GM12878 (cell line): ENCODE measurements at regions of chr18 and their contacts with region 1.

Region 1: GRCh38 chr18:54671291-54671881 is 80.3 kb downstream of the DYNAP start:
- DNase-seq: no peak
- ATAC-seq: 0 out of 3 replicates have a peak, but pooled peaks have one; percentile 21
- H3K4me3 ChIP-seq: no peak overlapping the region
- H3K27ac ChIP-seq: no peak overlapping the region
- H3K4me1 ChIP-seq: no peaks in the 10 kb centered on the region
- H3K27me3 ChIP-seq: no peaks in the 10 kb centered on the region
- CTCF ChIP-seq: peak; percentile 20 to 50 (median 39); a peak in 3 of 6 replicates
- EP300 ChIP-seq: no peak
- POLR2A ChIP-seq: no peak
- RAD21 ChIP-seq: peak; percentile 71

Region 2: DNA sequence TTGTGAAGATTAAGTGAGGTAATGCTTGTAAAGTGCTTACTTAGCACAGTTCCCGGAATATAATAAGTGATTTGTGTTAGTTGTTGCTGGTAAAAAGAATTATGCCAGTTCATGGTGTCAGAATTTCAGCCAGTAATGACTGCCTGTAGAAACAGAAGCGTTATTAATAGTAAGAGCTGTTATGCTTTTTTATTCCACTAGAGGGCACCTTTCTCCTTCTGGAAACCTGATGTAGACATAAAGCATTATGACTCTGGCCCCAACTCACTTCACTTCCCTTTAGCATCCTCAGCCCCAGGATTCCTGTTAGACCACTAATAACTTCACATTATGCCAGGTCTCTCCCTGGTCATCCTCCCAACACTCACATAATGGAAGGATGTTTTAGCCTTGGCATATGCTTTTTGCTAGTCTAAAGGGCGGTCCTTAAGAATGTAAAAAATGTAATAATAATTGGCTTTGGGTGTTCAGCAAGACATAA is 278.8 kb before region 1 on chr18:
- CTCF ChIA-PET with region 1: interaction called, 25 read pairs
- POLR2A ChIA-PET with region 1: no interaction called
- RAD21 ChIA-PET with region 1: interaction called, 4 read pairs
- SMC1A ChIA-PET with region 1: interaction called, 6 read pairs
- in situ Hi-C with region 1: no loop called
- intact Hi-C with region 1: loop called (anchors 5 kb)
- DNase-seq: no peak
- ATAC-seq: peak; percentile 76
- H3K4me3 ChIP-seq: no peak overlapping the region
- H3K27ac ChIP-seq: no peak overlapping the region
- H3K4me1 ChIP-seq: peaks cover 13% of the 10 kb centered on the region
- H3K27me3 ChIP-seq: no peaks in the 10 kb centered on the region
- CTCF ChIP-seq: peak; percentile 54 to 76 (median 76)
- EP300 ChIP-seq: no peak
- POLR2A ChIP-seq: no peak
- RAD21 ChIP-seq: peak; percentile 68

Region 3: GRCh38 chr18:54405290-54405689 is 266.1 kb before region 1 on chr18:
- CTCF ChIA-PET with region 1: no interaction called
- POLR2A ChIA-PET with region 1: no interaction called
- RAD21 ChIA-PET with region 1: no interaction called
- SMC1A ChIA-PET with region 1: no interaction called
- in situ Hi-C with region 1: no loop called
- intact Hi-C with region 1: no loop called
- DNase-seq: no peak
- ATAC-seq: no peak
- H3K4me3 ChIP-seq: no peak overlapping the region
- H3K27ac ChIP-seq: no peak overlapping the region
- H3K4me1 ChIP-seq: no peaks in the 10 kb centered on the region
- H3K27me3 ChIP-seq: no peaks in the 10 kb centered on the region
- CTCF ChIP-seq: no peak
- EP300 ChIP-seq: no peak
- POLR2A ChIP-seq: no peak
- RAD21 ChIP-seq: no peak

Region 4: GRCh38 chr18:54444319-54444914 is 227.0 kb before region 1 on chr18:
- CTCF ChIA-PET with region 1: interaction called, 24 read pairs
- POLR2A ChIA-PET with region 1: no interaction called
- RAD21 ChIA-PET with region 1: interaction called, 11 read pairs
- SMC1A ChIA-PET with region 1: interaction called, 35 read pairs
- in situ Hi-C with region 1: loop called (anchors 10 kb)
- intact Hi-C with region 1: loop called (anchors 1 kb)
- DNase-seq: no peak
- ATAC-seq: peak; percentile 86
- H3K4me3 ChIP-seq: no peak overlapping the region
- H3K27ac ChIP-seq: no peak overlapping the region
- H3K4me1 ChIP-seq: no peaks in the 10 kb centered on the region
- H3K27me3 ChIP-seq: peaks cover 0 to 3% of the 10 kb centered on the region in 2 experiments; a peak in 2 of 4 replicates
- CTCF ChIP-seq: peak; percentile 67 to 87 (median 76)
- EP300 ChIP-seq: no peak
- POLR2A ChIP-seq: no peak
- RAD21 ChIP-seq: peak; percentile 91

Region 5: DNA sequence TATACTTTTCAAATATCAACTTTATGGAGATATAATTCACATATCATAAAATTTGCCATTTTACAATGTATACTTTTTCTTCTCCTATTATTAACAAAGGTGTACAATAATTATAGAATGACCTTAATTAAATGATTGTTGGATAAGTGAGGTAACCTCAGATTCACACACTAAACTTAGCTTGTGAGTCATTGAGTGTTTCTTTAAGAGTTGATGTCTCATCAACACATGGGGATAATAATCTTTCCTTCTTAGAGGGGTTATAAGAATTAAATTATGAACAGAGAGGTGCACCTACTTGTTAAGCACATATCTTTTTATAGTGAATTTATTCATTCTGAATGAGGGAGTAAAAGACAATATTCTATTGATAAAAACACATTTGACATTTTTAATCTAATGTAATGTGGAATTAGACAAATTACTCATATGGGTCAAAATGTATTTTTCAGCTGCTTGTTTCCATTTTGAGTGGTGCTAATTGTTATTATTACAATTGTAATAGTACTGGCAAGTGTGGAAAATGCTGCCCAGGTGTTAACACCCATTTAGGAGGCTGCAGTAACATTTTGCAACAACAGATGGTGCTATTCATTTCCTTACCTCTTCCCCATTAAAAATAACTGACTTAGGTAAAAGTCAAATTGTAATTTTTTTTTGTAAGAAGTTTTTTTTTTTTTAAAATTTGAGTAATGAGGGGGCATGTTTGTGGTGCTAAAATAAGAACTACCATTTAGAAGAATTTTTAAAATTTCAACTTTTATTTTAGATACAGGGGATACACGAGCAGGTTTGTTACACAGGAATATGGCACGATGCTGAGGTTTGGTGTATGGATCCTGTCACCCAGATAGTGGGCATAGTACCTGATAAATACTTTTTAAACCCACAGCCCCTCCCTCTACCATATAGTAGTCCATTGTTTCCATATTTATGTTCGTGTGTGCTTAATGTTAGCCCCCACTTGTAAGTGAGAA is 112.5 kb before region 1 on chr18:
- CTCF ChIA-PET with region 1: interaction called, 12 read pairs
- POLR2A ChIA-PET with region 1: no interaction called
- RAD21 ChIA-PET with region 1: interaction called, 6 read pairs
- SMC1A ChIA-PET with region 1: interaction called, 3 read pairs
- in situ Hi-C with region 1: no loop called
- intact Hi-C with region 1: loop called (anchors 1 kb)
- DNase-seq: peak; percentile 11
- ATAC-seq: peak; percentile 60
- H3K4me3 ChIP-seq: no peak overlapping the region
- H3K27ac ChIP-seq: no peak overlapping the region
- H3K4me1 ChIP-seq: no peaks in the 10 kb centered on the region
- H3K27me3 ChIP-seq: no peaks in the 10 kb centered on the region; a peak in 1 of 4 replicates
- CTCF ChIP-seq: peak; percentile 53 to 67 (median 61); a peak in 5 of 6 replicates
- EP300 ChIP-seq: no peak
- POLR2A ChIP-seq: no peak
- RAD21 ChIP-seq: peak; percentile 51

Region 6: DNA sequence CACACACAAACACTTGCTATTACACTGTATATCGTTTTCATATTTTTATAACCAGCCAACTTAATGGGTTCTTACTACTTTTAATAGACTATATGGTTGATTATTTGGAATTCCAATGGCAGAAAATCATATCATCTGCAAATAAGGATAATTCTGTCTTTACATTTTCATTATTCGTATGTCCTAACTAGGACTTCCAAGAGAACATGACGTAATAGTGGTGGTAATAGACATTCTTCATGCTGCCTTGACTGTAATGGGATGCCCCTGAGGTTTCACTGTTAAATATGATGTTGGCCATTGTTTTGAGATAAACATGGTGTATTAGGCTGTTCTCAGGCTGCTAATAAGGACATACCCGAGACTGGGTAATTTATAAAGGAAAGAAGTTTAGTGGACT is 35.2 kb before region 1 on chr18:
- CTCF ChIA-PET with region 1: no interaction called
- POLR2A ChIA-PET with region 1: no interaction called
- RAD21 ChIA-PET with region 1: no interaction called
- SMC1A ChIA-PET with region 1: no interaction called
- in situ Hi-C with region 1: no loop called
- intact Hi-C with region 1: no loop called
- DNase-seq: no peak
- ATAC-seq: no peak
- H3K4me3 ChIP-seq: no peak overlapping the region
- H3K27ac ChIP-seq: no peak overlapping the region
- H3K4me1 ChIP-seq: no peaks in the 10 kb centered on the region
- H3K27me3 ChIP-seq: no peaks in the 10 kb centered on the region
- CTCF ChIP-seq: no peak
- EP300 ChIP-seq: no peak
- POLR2A ChIP-seq: no peak
- RAD21 ChIP-seq: no peak

Region 7: DNA sequence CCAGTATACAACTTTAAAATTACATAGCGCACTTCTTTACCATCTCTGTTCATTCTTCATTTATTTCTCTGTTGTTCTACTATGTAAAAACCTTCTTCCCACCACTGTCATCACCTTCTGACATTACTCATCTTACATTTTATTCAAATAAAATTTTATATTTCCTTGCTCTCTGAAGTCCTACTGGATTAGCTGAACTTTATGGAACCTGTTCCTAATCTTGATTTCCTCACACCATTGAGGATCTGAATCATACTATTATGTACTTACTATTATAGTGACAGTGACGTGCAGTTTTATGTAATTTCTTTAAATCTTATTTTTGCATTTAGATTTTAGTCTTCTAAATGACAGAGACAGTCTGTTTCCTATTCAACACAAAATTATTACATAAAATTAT is 17.9 kb after region 1 on chr18:
- CTCF ChIA-PET with region 1: interaction called, 10 read pairs
- POLR2A ChIA-PET with region 1: interaction called, 3 read pairs
- RAD21 ChIA-PET with region 1: interaction called, 3 read pairs
- SMC1A ChIA-PET with region 1: interaction called, 4 read pairs
- in situ Hi-C with region 1: no loop called
- intact Hi-C with region 1: no loop called
- DNase-seq: no peak
- ATAC-seq: no peak
- H3K4me3 ChIP-seq: no peak overlapping the region
- H3K27ac ChIP-seq: no peak overlapping the region
- H3K4me1 ChIP-seq: no peaks in the 10 kb centered on the region
- H3K27me3 ChIP-seq: no peaks in the 10 kb centered on the region
- CTCF ChIP-seq: no peak
- EP300 ChIP-seq: no peak
- POLR2A ChIP-seq: no peak
- RAD21 ChIP-seq: no peak

Region 8: GRCh38 chr18:54787616-54788015 is 116.2 kb after region 1 on chr18:
- CTCF ChIA-PET with region 1: no interaction called
- POLR2A ChIA-PET with region 1: no interaction called
- RAD21 ChIA-PET with region 1: no interaction called
- SMC1A ChIA-PET with region 1: no interaction called
- in situ Hi-C with region 1: no loop called
- intact Hi-C with region 1: no loop called
- DNase-seq: no peak
- ATAC-seq: no peak
- H3K4me3 ChIP-seq: no peak overlapping the region
- H3K27ac ChIP-seq: no peak overlapping the region
- H3K4me1 ChIP-seq: no peaks in the 10 kb centered on the region
- H3K27me3 ChIP-seq: no peaks in the 10 kb centered on the region
- CTCF ChIP-seq: no peak
- EP300 ChIP-seq: no peak
- POLR2A ChIP-seq: no peak
- RAD21 ChIP-seq: no peak